ENCODE measurements at regions of chr12 and their contacts with region 1.

Region 1: GRCh38 chr12:21940549-21941505 is at the start of gene ABCC9:
- DNase-seq: peak; percentile 66
- ATAC-seq: peak; percentile 81
- total RNA-seq, gene ABCC9: 78.1 TPM

Region 2: DNA sequence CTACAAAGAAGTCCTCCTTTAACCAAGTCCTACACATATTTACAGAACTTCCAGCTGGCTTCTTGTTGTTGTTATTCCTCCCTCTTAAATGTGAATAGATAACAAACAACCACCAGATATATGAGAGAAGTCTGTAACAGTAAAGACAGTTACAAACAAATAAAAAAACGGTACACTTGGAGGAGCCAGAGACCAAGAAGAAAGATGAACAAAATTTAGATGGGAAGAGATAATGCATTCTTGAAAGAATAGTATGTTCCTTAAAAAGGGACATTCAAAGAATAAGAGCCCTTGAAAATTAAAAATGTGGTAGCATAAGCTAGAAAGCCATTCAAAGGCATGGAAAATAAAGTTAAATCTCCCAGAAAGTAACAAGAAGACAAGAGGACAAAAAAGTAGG is 632.0 kb before region 1 on chr12:
- intact Hi-C with region 1: no loop called
- DNase-seq: no peak
- ATAC-seq: no peak

Region 3: DNA sequence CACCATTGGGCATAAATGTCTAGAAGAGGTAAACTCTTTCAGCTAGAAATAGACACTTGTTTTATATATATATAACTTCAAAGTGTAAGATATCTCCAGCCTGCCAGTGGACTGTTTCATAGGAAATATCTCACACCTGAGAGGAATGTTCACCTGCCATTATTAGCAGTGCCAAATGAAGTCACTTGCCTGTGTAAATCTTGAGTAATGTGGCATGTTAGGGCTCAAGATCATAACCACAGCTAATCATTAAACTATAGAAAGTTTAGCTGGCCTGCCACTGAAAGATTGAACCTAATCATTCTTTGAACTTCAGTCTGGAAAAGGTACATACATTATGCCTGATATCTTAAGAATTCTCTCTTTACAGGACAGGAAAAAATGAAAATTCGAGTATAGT is 140.8 kb before region 1 on chr12:
- intact Hi-C with region 1: no loop called
- DNase-seq: no peak
- ATAC-seq: no peak

Region 4: DNA sequence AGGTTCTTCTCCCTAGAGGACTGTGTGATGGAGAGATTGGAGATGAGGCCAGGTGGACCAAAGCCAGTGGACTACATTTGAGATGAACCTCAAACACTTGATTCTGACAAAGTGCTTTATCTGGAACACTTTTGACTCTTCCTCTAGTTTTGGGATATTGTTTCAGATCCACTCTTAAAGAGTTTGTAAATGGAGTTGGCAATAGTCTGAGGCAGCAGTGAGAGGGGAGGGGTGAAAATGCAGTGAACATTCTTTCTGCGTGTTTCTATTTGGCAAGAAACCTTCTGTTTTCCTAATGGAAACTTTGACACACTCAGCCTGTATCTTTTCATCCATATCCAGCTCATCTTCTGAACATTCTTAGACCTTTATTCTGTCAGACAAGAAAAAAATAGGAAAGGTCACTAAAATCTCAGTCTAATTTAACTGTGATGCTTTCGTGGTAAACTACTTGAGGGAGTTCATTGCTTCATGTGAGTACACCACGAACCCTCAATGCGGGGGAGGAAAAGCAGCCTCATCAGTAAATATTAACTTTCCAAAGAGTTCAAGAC is 109.0 kb before region 1 on chr12:
- intact Hi-C with region 1: loop called (anchors 5 kb)
- DNase-seq: no peak
- ATAC-seq: peak; percentile 71

Region 5: GRCh38 chr12:21881965-21882364 is 58.9 kb before region 1 on chr12:
- intact Hi-C with region 1: loop called (anchors 5 kb)
- DNase-seq: peak; percentile 63
- ATAC-seq: peak; percentile 84

Region 6: DNA sequence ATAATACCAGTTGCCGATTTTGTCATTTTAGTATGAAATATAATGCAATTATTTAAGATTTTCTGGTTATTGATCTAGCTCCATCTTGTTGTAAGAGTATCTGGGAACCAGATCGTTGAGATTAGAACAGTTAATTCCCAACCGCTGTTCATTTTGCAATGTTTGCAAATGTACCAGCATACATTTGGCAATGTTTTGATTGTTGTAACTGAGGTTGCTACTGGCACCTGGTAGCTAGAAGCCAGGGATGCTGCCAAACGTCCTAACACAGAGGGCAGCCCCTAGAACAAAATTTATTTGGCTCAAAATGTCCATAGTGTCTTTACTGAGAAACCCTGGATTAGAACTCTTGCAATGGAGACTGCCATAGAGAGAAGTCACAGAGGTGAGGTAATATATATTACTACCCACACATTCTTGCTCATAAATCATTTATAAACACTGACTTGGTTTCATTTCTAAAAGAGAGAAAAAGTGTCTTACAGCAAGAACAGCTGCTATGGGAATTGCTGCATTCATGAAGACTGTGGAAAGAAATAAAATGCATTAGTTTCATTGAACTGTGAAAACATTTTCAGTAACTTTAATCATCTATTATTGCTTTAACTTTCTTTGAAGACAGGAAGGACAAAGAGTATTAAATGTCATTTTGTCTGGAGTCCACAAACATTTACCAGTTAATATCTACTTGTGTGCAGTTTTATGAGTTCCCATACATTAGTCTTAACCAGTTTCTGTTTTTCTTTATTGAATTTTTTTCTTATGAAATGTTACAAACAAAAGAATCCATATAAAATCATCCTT is 45.8 kb before region 1 on chr12:
- intact Hi-C with region 1: no loop called
- DNase-seq: no peak
- ATAC-seq: no peak

Region 7: GRCh38 chr12:21984375-21984774 is 43.5 kb after region 1 on chr12:
- intact Hi-C with region 1: loop called (anchors 5 kb)
- DNase-seq: no peak
- ATAC-seq: no peak

Measured in Right ventricle myocardium inferior (tissue), 1 donor.